Activated T-helper 2 cell treated with anti-CD3 and anti-CD28 coated beads, Interferon-gamma antibody, Interleukin-2, Interleukin-4, amounts not matched to agents 10 μg/mL and 5 μg/mL and 100 μg/mL, durations not matched to agents 14 hours and 24 hours and 36 hours (primary cell): ENCODE measurements at regions of chr20 and their contacts with region 1.

Region 1: DNA sequence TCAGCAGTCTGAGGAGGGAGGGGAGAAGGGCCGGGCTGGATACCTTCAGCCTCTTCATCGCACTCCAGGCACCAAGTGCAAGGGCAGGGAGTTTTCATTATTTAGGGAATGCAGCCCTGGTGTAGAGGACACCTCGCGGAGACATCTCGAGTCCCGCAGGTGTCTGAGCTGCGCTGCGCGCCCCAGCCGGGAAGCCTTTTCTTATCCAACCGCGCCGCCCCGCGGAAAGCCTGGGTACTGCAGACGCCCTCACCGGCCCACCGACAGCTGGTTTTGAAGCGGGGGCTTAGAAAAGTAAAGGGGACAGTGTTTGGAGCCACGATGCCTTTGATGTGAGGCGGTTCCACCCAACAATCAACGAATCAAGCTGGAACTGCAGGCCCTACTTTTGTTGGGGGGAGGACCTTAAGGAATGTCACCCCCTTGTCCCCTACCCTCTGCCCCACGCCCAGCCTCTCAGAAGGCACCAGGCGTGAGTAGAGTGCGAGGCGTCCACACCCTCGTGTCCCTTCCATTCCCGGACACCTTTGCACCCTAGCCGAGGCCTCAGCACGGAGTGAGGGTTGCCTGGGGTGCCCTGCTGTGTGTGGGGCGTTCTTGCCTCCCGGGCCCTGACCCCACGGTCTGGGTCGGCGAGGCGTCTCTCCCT is 8.6 kb downstream of the NKX2-2 start:
- DNase-seq: peak; percentile 67
- H3K4me3 Mint-ChIP-seq: peak overlapping the region; percentile 39
- H3K27ac Mint-ChIP-seq: no peak overlapping the region
- H3K4me1 Mint-ChIP-seq: peaks cover 28% of the 10 kb centered on the region
- H3K27me3 Mint-ChIP-seq: peaks cover 51% of the 10 kb centered on the region

Region 2: GRCh38 chr20:20369250-20370093 is 1135.8 kb before region 1 on chr20:
- intact Hi-C with region 1: loop called (anchors 5 kb)
- DNase-seq: no peak
- H3K4me3 Mint-ChIP-seq: peak overlapping the region; percentile 84
- H3K27ac Mint-ChIP-seq: peak overlapping the region; percentile 56
- H3K4me1 Mint-ChIP-seq: peaks cover 25% of the 10 kb centered on the region
- H3K27me3 Mint-ChIP-seq: peaks cover 51% of the 10 kb centered on the region

Region 3: GRCh38 chr20:21048841-21049273 is 456.4 kb before region 1 on chr20:
- intact Hi-C with region 1: loop called (anchors 2 kb)
- DNase-seq: peak; percentile 24
- H3K4me3 Mint-ChIP-seq: no peak overlapping the region
- H3K27ac Mint-ChIP-seq: no peak overlapping the region
- H3K4me1 Mint-ChIP-seq: no peaks in the 10 kb centered on the region
- H3K27me3 Mint-ChIP-seq: peaks cover 1% of the 10 kb centered on the region

Region 4: DNA sequence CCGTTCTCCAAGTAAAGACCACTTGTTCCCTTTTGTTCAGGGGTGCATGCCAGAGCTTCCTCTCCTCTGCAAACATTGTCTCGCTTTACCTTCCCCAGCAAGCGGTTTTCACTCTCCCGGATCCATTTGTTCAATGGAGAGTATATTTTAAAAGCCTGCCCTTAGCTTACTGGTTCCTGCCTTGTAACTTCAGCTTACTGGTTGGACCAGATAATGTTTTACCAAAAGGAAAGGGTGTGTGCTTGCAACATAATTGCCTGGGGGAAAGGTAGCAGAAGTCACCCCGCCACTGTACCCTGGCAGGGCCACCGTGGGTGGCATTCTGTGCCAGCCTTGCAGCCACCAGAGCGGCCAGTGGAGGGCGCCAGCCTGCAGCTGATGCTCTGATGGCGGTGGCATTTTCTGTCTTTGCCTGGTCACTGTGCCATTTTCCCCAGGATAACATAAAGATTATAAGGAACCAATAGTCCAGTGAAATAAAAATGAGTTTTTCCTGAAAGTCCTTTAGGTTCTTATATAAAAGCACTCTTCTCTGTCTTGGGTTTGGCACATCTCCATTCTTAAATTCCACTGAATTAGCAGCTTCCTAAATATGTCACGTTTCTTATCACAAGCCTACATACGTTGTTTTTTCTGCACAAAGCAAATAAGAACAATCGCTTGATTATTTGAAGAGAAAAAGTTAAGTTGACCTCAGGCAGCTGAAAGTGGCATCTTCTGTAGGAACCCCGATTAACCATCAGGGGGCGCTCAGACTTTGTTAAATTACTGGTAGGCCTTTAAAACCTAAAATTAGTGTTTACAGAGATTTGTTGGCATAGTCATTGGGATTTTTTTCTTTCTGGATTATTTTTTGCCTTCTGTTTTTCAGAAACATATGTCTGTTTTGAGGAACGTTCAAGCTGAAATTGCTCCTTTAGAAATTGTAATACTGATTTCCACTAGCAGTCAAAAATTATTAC is 269.5 kb before region 1 on chr20:
- intact Hi-C with region 1: loop called (anchors 1 kb)
- DNase-seq: peak; percentile 40
- H3K4me3 Mint-ChIP-seq: no peak overlapping the region
- H3K27ac Mint-ChIP-seq: no peak overlapping the region
- H3K4me1 Mint-ChIP-seq: peaks cover 3% of the 10 kb centered on the region
- H3K27me3 Mint-ChIP-seq: no peaks in the 10 kb centered on the region

Region 5: DNA sequence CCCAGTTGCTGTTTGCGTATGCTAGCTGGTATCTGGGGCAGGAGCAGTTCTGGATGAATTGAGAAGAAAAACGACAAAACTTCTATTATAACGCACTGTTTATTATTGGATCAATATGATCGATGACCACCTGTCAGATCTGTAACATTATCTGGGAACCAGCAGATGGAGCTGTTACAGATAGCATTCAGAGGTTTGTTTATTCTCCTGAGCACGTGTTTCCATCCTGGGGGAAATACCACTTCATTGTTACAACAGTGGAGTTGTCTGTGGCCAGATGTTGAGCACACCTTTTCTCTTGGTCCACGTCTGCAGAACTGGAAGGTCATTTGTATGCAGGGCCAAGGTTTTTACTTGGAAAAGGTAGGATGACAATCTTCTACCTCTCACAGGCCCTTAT is 24.6 kb after region 1 on chr20:
- intact Hi-C with region 1: no loop called
- DNase-seq: no peak
- H3K4me3 Mint-ChIP-seq: no peak overlapping the region
- H3K27ac Mint-ChIP-seq: no peak overlapping the region
- H3K4me1 Mint-ChIP-seq: peaks cover 3% of the 10 kb centered on the region
- H3K27me3 Mint-ChIP-seq: peaks cover 68% of the 10 kb centered on the region

Region 6: DNA sequence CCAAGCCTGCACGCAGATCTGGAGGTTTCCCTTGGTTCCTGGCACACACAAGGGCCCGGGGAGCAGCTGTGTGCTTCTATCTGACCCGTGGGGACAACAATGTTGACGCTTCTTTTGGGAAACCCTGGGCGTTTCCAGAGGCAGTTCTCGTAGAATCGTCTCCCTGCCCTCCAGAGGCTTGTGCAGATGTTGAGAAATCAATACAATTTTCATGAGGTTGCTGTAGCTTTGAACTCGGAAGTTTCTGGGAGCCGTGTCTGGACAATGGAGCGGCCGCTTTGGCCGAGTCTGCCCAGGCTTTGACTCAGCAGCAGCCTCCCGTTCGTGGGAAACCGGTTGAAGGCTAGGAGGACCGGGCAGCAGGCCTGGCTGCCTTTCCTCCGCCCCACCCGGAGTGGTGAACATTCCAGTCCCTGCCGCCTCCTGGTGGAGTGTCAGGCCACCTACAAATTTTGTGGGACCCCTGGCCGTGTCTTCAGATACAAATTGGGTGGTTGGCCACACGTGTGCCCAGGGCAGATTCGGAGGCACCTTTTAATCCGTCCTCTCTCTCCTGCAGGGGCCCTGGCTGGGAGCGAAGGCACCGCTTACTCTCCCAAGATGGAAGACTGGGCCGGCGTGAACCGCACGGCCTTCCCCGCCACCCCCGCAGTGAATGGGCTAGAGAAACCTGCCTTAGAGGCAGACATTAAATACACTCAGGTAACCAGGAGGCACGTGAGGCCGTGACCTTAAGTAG is 202.9 kb after region 1 on chr20:
- intact Hi-C with region 1: loop called (anchors 2 kb)
- DNase-seq: no peak
- H3K4me3 Mint-ChIP-seq: no peak overlapping the region
- H3K27ac Mint-ChIP-seq: no peak overlapping the region
- H3K4me1 Mint-ChIP-seq: no peaks in the 10 kb centered on the region
- H3K27me3 Mint-ChIP-seq: peaks cover 74% of the 10 kb centered on the region